Tibial artery (tissue), 4 donors: ENCODE measurements at regions of chr5 and their contacts with region 1.

Region 1: DNA sequence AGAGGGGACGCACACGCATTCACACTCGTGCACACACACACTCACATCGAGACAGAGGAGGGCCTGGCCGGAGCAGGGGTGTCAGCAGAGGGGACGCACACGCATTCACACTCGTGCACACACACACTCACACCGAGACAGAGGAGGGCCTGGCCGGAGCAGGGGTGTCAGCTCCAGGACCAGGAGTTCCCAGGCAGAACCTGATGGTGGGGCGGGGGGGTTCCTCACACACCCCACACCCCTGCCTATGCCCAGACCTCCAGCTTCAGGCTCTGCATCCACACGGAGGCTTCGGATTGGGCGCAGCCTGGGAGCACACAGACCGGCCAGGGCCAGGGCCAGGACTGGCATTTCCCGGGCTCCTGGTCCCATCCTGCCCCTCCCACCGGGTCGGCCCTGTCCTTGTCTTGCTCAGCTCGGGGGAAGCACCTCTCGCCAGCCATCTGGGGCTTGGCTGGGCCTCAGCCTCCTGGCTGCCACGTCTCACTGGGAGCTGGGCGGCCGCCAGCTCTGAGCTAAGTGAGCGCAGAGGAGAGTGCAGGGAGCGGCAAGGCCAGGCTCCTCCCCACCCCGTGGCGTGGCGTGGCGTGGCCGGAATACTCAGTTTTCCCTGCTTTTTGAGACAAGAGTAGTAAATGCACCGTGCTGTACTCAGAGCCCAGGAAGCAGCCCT is 31.3 kb downstream of the ADAMTS2 start:
- DNase-seq: peak; percentile 88 to 97
- H3K4me3 ChIP-seq: peak overlapping the region; percentile 21 to 23
- H3K27ac ChIP-seq: peak overlapping the region; percentile 61 to 81
- H3K4me1 ChIP-seq: peaks cover 0 to 28% (median 22%) of the 10 kb centered on the region in 4 donors
- H3K27me3 ChIP-seq: no peaks in the 10 kb centered on the region
- CTCF ChIP-seq: no peak

Region 2: GRCh38 chr5:179265514-179266290 is 48.3 kb before region 1 on chr5:
- intact Hi-C with region 1: loop called (anchors 2 kb)
- DNase-seq: peak; percentile 97 to 99
- H3K4me3 ChIP-seq: peak overlapping the region in 1 of 2 donors; percentile 23
- H3K27ac ChIP-seq: peak overlapping the region; percentile 68 to 75
- H3K4me1 ChIP-seq: peaks cover 0 to 62% (median 43%) of the 10 kb centered on the region in 4 donors
- H3K27me3 ChIP-seq: no peaks in the 10 kb centered on the region
- CTCF ChIP-seq: no peak

Region 3: GRCh38 chr5:179361037-179361603 is 47.1 kb after region 1 on chr5:
- intact Hi-C with region 1: no loop called
- DNase-seq: no peak
- H3K4me3 ChIP-seq: no peak overlapping the region
- H3K27ac ChIP-seq: no peak overlapping the region
- H3K4me1 ChIP-seq: peaks cover 0 to 13% (median 2%) of the 10 kb centered on the region in 4 donors
- H3K27me3 ChIP-seq: peaks cover 0 to 20% of the 10 kb centered on the region in 2 donors
- CTCF ChIP-seq: no peak